ENCODE measurements at regions of chr4 and their contacts with region 1.

Region 1: GRCh38 chr4:121823505-121824170 is at the start of gene CCNA2:
- DNase-seq: peak; percentile 87 to 97 (median 94)
- ATAC-seq: peak; percentile 98
- H3K4me3 ChIP-seq: peak within 1 kb of the TSS; percentile 71
- H3K4me3 Mint-ChIP-seq: peak within 1 kb of the TSS; percentile 94
- H3K27ac ChIP-seq: peak within 1 kb of the TSS; percentile 25 to 61
- H3K27ac Mint-ChIP-seq: peak within 1 kb of the TSS; percentile 83
- H3K4me1 ChIP-seq: peaks cover 11% of the 10 kb centered on the region
- H3K4me1 Mint-ChIP-seq: peaks cover 26% of the 10 kb centered on the region
- H3K27me3 ChIP-seq: no peaks in the 10 kb centered on the region
- H3K27me3 Mint-ChIP-seq: no peaks in the 10 kb centered on the region
- CTCF ChIP-seq: no peak
- total RNA-seq, gene CCNA2: 0.34 to 0.41 TPM

Region 2: DNA sequence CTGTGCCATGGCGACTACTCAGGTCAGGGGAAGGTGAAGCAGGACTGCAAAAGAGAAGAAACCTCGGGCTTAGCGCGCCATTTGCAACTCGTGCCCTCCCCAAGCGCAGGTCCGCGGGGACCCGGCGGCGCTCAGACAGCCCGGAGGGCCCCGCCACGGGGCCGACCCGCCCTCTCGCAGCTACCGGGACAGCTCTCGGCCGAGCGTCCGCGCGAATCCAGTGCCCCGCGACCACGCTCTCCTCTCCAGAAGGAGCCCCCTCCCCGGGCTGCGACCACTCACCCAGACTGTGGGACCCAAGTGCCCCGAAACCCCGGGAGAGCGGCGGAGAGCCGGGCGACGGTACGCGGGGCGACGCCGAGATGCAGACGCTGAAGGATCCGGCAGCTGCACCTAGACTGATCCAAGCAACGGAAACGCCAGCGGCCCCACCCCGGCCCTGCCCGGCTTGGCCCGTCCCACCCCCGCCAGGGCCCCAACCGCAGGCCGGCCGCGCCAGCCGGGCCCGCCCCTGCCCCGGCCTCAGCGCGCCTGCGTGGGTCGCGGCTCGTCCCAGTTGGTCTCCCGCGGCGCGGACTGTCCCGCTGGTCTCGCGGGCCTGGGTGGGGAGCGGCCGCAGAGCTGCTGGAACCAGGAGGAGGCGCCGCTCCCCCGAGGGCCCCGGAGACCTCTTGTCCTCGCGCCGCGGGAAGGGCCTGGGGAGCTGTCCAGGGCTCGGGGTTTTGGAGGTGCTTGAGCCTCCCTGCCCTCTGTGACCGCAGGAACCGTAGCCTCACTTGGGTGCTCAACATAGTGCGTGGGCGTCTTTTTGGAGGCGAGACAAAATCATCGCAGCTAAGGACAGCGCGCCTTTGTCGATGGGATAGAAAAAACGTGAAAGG is 126.8 kb before region 1 on chr4 and contains the start of gene ANXA5:
- CTCF ChIA-PET with region 1: no interaction called
- POLR2A ChIA-PET with region 1: interaction called, 12 read pairs
- intact Hi-C with region 1: no loop called
- DNase-seq: peak; percentile 26 to 87 (median 62)
- ATAC-seq: peak; percentile 82
- H3K4me3 ChIP-seq: peak within 1 kb of the TSS; percentile 92
- H3K4me3 Mint-ChIP-seq: peak within 1 kb of the TSS; percentile 99
- H3K27ac ChIP-seq: peak within 1 kb of the TSS in 1 of 2 donors; percentile 66
- H3K27ac Mint-ChIP-seq: peak within 1 kb of the TSS; percentile 95
- H3K4me1 ChIP-seq: peaks cover 19% of the 10 kb centered on the region
- H3K4me1 Mint-ChIP-seq: peaks cover 40% of the 10 kb centered on the region
- H3K27me3 ChIP-seq: no peaks in the 10 kb centered on the region
- H3K27me3 Mint-ChIP-seq: no peaks in the 10 kb centered on the region
- CTCF ChIP-seq: no peak
- total RNA-seq, gene ANXA5: 50.8 to 55.9 TPM

Region 3: GRCh38 chr4:121800961-121801714 is 22.5 kb before region 1 on chr4 and contains the start of gene EXOSC9:
- CTCF ChIA-PET with region 1: no interaction called
- POLR2A ChIA-PET with region 1: interaction called, 40 read pairs
- intact Hi-C with region 1: loop called in 1 of 2 experiments (anchors 1 kb)
- DNase-seq: peak; percentile 88 to 97 (median 94)
- ATAC-seq: peak; percentile 87
- H3K4me3 ChIP-seq: peak within 1 kb of the TSS; percentile 95
- H3K4me3 Mint-ChIP-seq: peak within 1 kb of the TSS; percentile 96
- H3K27ac ChIP-seq: peak within 1 kb of the TSS; percentile 80 to 96
- H3K27ac Mint-ChIP-seq: peak within 1 kb of the TSS; percentile 100
- H3K4me1 ChIP-seq: peaks cover 13% of the 10 kb centered on the region
- H3K4me1 Mint-ChIP-seq: peaks cover 51% of the 10 kb centered on the region
- H3K27me3 ChIP-seq: no peaks in the 10 kb centered on the region
- H3K27me3 Mint-ChIP-seq: no peaks in the 10 kb centered on the region
- CTCF ChIP-seq: no peak
- total RNA-seq, gene EXOSC9: 71.6 to 72.7 TPM

Region 4: GRCh38 chr4:121869841-121870656 is 46.4 kb after region 1 on chr4 and contains the start of gene BBS7:
- CTCF ChIA-PET with region 1: no interaction called
- POLR2A ChIA-PET with region 1: interaction called, 14 read pairs
- intact Hi-C with region 1: loop called in 1 of 2 experiments (anchors 1 kb)
- DNase-seq: peak; percentile 84 to 100 (median 96)
- ATAC-seq: peak; percentile 98
- H3K4me3 ChIP-seq: peak within 1 kb of the TSS; percentile 80
- H3K4me3 Mint-ChIP-seq: peak within 1 kb of the TSS; percentile 99
- H3K27ac ChIP-seq: peak within 1 kb of the TSS in 1 of 2 donors; percentile 71
- H3K27ac Mint-ChIP-seq: peak within 1 kb of the TSS; percentile 87
- H3K4me1 ChIP-seq: peaks cover 12% of the 10 kb centered on the region
- H3K4me1 Mint-ChIP-seq: peaks cover 26% of the 10 kb centered on the region
- H3K27me3 ChIP-seq: peaks cover 0 to 8% of the 10 kb centered on the region in 2 experiments
- H3K27me3 Mint-ChIP-seq: peaks cover 20% of the 10 kb centered on the region
- CTCF ChIP-seq: no peak
- total RNA-seq, gene BBS7: 3.0 to 3.8 TPM

Region 5: DNA sequence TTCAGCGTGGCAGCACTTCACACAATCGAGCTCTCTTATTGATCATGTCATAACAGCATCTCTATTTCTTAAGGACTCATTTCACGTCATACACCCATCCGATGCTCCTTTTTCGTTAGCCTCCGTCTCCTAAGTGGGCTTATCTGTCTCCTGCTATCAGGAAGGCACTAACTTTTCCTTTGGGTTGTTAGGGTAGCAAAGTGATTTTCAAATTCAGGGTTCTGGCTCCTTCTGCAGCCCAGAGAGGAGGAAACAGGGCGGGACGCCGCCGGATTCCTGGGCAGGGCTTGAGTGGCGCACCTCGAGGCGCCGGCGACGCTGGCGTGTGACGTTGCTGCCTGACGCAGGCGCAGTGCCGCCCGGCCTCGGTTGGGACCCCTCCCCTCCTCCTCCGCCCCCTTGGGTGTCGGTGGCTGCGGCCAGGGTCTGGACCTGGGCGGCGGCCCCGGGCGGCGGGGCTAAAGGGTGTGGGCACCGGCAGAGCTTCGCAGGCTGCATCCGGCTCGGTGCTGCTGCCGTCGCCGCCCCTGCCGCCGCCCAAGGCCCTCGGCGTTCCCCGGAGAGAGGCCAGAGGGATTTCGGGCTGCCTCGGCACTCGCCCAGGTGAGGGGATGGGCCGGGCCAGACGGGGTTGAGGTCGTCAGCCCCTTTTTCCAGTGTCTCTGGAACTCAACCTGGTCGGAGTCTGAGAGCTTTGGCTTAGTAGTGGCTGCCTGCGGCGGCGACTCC is 328.5 kb after region 1 on chr4 and contains the start of gene BLTP1:
- CTCF ChIA-PET with region 1: no interaction called
- POLR2A ChIA-PET with region 1: no interaction called
- intact Hi-C with region 1: loop called (anchors 1 to 10 kb)
- DNase-seq: peak; percentile 73 to 94 (median 84)
- ATAC-seq: peak; percentile 88
- H3K4me3 ChIP-seq: peak within 1 kb of the TSS; percentile 93
- H3K4me3 Mint-ChIP-seq: peak within 1 kb of the TSS; percentile 94
- H3K27ac ChIP-seq: peak within 1 kb of the TSS; percentile 81 to 89
- H3K27ac Mint-ChIP-seq: peak within 1 kb of the TSS; percentile 94
- H3K4me1 ChIP-seq: peaks cover 11% of the 10 kb centered on the region
- H3K4me1 Mint-ChIP-seq: peaks cover 77% of the 10 kb centered on the region
- H3K27me3 ChIP-seq: no peaks in the 10 kb centered on the region
- H3K27me3 Mint-ChIP-seq: no peaks in the 10 kb centered on the region
- CTCF ChIP-seq: no peak
- total RNA-seq, gene BLTP1: 86.9 to 93.6 TPM

Region 6: GRCh38 chr4:122246551-122246950 is 422.9 kb after region 1 on chr4:
- CTCF ChIA-PET with region 1: no interaction called
- POLR2A ChIA-PET with region 1: no interaction called
- intact Hi-C with region 1: no loop called
- DNase-seq: no peak
- ATAC-seq: no peak
- H3K4me3 ChIP-seq: no peak overlapping the region
- H3K4me3 Mint-ChIP-seq: no peak overlapping the region
- H3K27ac ChIP-seq: no peak overlapping the region
- H3K27ac Mint-ChIP-seq: no peak overlapping the region
- H3K4me1 ChIP-seq: no peaks in the 10 kb centered on the region
- H3K4me1 Mint-ChIP-seq: no peaks in the 10 kb centered on the region
- H3K27me3 ChIP-seq: no peaks in the 10 kb centered on the region
- H3K27me3 Mint-ChIP-seq: no peaks in the 10 kb centered on the region
- CTCF ChIP-seq: no peak

Region 7: DNA sequence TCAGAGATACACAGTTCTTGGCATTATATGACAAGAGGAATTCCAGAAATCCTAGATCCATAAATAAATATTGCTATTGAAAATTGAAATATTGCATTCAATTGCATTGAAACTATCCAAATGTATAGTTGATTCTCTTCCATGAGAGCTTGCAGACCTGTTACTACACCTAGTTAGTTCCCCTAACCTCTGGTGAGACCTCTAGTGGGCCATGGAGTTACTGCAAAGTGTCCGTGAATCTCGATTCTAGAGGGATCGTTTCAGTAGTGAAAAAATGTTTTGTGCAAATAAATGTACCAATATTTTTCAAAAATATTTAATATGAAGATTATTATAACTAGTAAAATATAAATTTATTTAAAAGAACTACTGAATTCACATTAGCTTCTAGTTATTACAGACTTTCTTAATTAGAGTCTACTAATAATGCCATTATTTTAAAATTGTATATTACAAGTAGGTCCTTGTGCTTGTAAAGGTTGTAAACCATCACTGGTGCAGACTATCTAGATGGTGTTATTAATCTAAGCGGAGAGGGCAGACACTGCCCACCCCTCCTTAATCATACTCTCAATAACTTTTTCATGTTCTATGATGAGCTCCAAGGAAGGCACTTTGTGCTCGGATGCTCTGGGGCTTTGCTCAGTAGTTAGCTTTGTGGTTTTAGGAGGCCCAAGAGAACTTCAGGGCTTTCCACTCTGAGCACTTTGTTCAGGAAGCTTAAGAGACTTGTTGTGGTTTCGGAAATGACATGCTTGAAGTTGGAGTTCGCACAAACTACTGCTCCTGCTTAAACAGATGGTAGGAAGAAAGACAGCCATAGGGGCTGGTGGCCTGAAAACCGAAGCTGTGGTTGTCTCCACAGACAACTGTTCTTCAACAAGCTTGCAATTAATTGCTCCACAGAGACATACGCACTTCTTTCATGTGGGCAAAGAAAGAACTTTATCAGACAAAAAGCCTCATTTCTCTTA is 754.5 kb after region 1 on chr4:
- CTCF ChIA-PET with region 1: no interaction called
- POLR2A ChIA-PET with region 1: no interaction called
- intact Hi-C with region 1: loop called in 1 of 2 experiments (anchors 2 kb)
- DNase-seq: peak; percentile 35 to 93 (median 58)
- ATAC-seq: peak; percentile 82
- H3K4me3 ChIP-seq: peak overlapping the region; percentile 19
- H3K4me3 Mint-ChIP-seq: peak overlapping the region; percentile 57
- H3K27ac ChIP-seq: peak overlapping the region; percentile 67 to 73
- H3K27ac Mint-ChIP-seq: peak overlapping the region; percentile 90
- H3K4me1 ChIP-seq: peaks cover 23% of the 10 kb centered on the region
- H3K4me1 Mint-ChIP-seq: peaks cover 44% of the 10 kb centered on the region
- H3K27me3 ChIP-seq: no peaks in the 10 kb centered on the region
- H3K27me3 Mint-ChIP-seq: no peaks in the 10 kb centered on the region
- CTCF ChIP-seq: peak; percentile 82

Region 8: GRCh38 chr4:122922877-122923511 is 1099.4 kb after region 1 on chr4:
- CTCF ChIA-PET with region 1: no interaction called
- POLR2A ChIA-PET with region 1: no interaction called
- intact Hi-C with region 1: loop called in 1 of 2 experiments (anchors 5 kb)
- DNase-seq: peak; percentile 68 to 93 (median 84)
- ATAC-seq: peak; percentile 98
- H3K4me3 ChIP-seq: peak overlapping the region; percentile 69
- H3K4me3 Mint-ChIP-seq: peak overlapping the region; percentile 98
- H3K27ac ChIP-seq: peak overlapping the region; percentile 57 to 62
- H3K27ac Mint-ChIP-seq: no peak overlapping the region
- H3K4me1 ChIP-seq: peaks cover 9% of the 10 kb centered on the region
- H3K4me1 Mint-ChIP-seq: peaks cover 8% of the 10 kb centered on the region
- H3K27me3 ChIP-seq: no peaks in the 10 kb centered on the region
- H3K27me3 Mint-ChIP-seq: no peaks in the 10 kb centered on the region
- CTCF ChIP-seq: no peak

Measured in CD4-positive, alpha-beta T cell (primary cell).